ENCODE measurements at regions of chr1 and their contacts with region 1.

Region 1: DNA sequence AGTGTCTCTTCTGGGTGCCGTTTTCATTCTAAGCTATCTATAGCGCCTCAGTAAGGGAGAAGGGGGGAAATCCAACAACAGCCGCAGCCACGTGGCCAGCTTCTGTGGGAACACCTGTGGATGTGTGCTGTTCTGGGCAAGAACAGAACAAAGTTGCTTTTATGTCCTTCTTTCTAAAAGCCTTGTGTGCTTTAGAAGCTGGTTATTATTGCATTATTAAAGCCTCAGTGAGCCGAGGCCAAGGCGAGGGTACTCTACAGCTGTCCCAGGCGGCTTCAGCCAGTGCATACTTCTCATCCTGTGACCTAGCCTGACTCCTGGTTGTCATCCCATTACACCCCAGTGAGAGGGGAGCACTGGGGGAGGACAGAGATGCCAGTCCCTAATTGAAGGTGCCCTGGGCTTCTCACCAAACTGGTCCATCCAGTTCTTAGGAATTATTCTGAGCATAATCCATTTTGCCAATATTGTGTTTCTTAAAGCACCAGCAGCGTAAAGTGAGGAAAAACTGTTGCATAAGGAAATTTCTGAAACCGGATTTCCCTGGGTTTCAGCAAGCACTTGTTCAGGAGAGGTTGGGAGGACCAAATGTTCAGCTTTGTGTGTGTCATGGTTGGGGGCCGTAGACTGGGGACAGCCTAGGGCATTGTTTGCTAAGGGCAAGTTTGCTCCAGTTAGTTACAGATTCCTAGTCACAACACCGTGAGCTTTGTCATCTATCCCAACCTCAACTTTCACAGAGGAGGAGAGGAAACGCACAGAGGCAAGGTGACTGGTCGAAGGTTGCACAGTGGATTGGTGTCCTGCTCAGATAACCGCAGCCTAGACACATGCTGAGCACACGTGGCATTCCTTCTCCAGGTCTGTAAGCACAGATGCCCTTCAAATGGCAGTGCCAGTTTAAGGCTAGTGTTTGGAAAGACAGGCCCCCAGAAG is 61.0 kb upstream of the ATP1A1 start:
- DNase-seq: peak in 5 of 6 donors; percentile 55 to 67 (median 60)
- ATAC-seq: peak; percentile 72 to 81 (median 76)
- H3K4me3 ChIP-seq: no peak overlapping the region
- H3K27ac ChIP-seq: peak overlapping the region; percentile 62 to 86 (median 70)
- H3K4me1 ChIP-seq: peaks cover 48 to 74% (median 61%) of the 10 kb centered on the region in 3 donors
- H3K27me3 ChIP-seq: no peaks in the 10 kb centered on the region
- CTCF ChIP-seq: no peak

Region 2: GRCh38 chr1:116372587-116373444 is 60.8 kb after region 1 on chr1 and contains the start of gene ATP1A1:
- intact Hi-C with region 1: loop called in 1 of 3 experiments (anchors 10 kb)
- DNase-seq: peak; percentile 98 to 100 (median 99)
- ATAC-seq: peak; percentile 83 to 87 (median 86)
- H3K4me3 ChIP-seq: peak within 1 kb of the TSS; percentile 82 to 96 (median 91)
- H3K27ac ChIP-seq: peak within 1 kb of the TSS; percentile 91 to 96 (median 94)
- H3K4me1 ChIP-seq: peaks cover 9 to 29% (median 21%) of the 10 kb centered on the region in 3 donors
- H3K27me3 ChIP-seq: no peaks in the 10 kb centered on the region
- CTCF ChIP-seq: no peak
- total RNA-seq, gene ATP1A1: 338 to 735 (median 584) TPM